ENCODE measurements at regions of chr6 and their contacts with region 1.

Region 1: GRCh38 chr6:38034274-38034914 is 214.9 kb downstream of the ZFAND3 start:
- DNase-seq: peak; percentile 71
- ATAC-seq: peak; percentile 95
- H3K4me3 ChIP-seq: no peak overlapping the region
- H3K27ac ChIP-seq: no peak overlapping the region
- H3K4me1 ChIP-seq: peaks cover 30% of the 10 kb centered on the region
- H3K27me3 ChIP-seq: no peaks in the 10 kb centered on the region
- CTCF ChIP-seq: peak; percentile 90

Region 2: GRCh38 chr6:38570750-38571149 is 536.4 kb after region 1 on chr6:
- CTCF ChIA-PET with region 1: no interaction called
- POLR2A ChIA-PET with region 1: no interaction called
- intact Hi-C with region 1: loop called (anchors 10 kb)
- DNase-seq: peak; percentile 62
- ATAC-seq: peak; percentile 27; the same call in 1 of the 2 replicates
- H3K4me3 ChIP-seq: no peak overlapping the region
- H3K27ac ChIP-seq: no peak overlapping the region
- H3K4me1 ChIP-seq: peaks cover 21% of the 10 kb centered on the region
- H3K27me3 ChIP-seq: no peaks in the 10 kb centered on the region
- CTCF ChIP-seq: peak; percentile 83

Region 3: GRCh38 chr6:39982720-39983119 is 1948.3 kb after region 1 on chr6:
- CTCF ChIA-PET with region 1: no interaction called
- POLR2A ChIA-PET with region 1: no interaction called
- intact Hi-C with region 1: no loop called
- DNase-seq: no peak
- ATAC-seq: no peak
- H3K4me3 ChIP-seq: no peak overlapping the region
- H3K27ac ChIP-seq: no peak overlapping the region
- H3K4me1 ChIP-seq: no peaks in the 10 kb centered on the region
- H3K27me3 ChIP-seq: no peaks in the 10 kb centered on the region
- CTCF ChIP-seq: no peak